OCI-LY7 (cell line): ENCODE measurements at regions of chr5 and their contacts with region 1.

Region 1: GRCh38 chr5:91499943-91500531 is 116.9 kb upstream of the ARRDC3 start:
- DNase-seq: peak; percentile 47
- H3K4me3 ChIP-seq: no peak overlapping the region
- H3K27ac ChIP-seq: no peak overlapping the region
- H3K4me1 ChIP-seq: no peaks in the 10 kb centered on the region
- CTCF ChIP-seq: peak; percentile 91

Region 2: DNA sequence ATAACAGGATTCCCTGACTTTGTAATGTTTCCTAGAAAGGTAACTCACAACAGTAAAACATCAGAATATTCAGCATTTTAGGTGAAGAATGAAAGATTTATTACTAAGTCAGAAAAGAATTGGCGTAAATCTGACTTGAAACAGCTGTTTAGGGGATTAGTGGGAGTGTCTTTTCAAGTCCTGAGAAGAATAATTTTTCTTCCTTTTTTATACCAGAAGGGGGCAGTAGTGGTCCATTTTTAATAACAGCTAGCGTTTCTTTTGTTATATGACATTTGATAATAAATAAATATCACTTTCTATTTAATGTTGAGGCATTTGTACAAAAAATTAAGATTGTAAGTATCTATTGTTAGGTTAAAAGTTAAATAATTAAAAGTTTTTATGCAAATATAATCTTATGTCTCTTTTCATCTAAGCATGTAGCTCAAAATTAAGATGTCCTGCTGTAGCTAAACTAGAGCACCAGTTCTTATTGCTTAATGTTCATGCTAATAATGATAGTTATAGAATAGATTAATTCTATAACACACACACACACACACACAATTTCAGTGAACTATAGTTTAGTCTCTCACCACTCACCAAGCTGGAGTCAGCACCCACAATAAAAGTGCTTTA is 141.8 kb after region 1 on chr5:
- CTCF ChIA-PET with region 1: no interaction called
- POLR2A ChIA-PET with region 1: no interaction called
- intact Hi-C with region 1: loop called (anchors 5 kb)
- DNase-seq: peak; percentile 50
- H3K4me3 ChIP-seq: no peak overlapping the region
- H3K27ac ChIP-seq: no peak overlapping the region
- H3K4me1 ChIP-seq: no peaks in the 10 kb centered on the region
- CTCF ChIP-seq: peak; percentile 92

Region 3: DNA sequence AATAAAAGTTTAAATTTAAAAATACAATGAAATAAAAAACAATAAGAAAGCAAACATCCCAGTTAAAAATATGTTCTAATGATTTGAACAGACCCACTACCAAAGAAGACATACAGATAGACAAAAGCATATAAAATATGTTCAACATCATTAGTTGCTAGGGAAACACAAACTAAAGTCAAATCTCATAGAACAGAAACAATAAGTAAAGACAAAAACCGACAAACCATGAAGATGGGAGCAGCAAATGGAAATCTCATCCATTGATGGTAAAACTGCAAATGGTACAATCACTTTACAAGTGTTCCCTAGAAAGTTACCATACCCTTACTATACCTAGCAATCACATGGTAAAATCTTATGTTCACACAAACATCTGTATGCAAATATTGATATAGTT is 313.5 kb after region 1 on chr5:
- CTCF ChIA-PET with region 1: no interaction called
- POLR2A ChIA-PET with region 1: no interaction called
- intact Hi-C with region 1: no loop called
- DNase-seq: no peak
- H3K4me3 ChIP-seq: no peak overlapping the region
- H3K27ac ChIP-seq: no peak overlapping the region
- H3K4me1 ChIP-seq: no peaks in the 10 kb centered on the region
- CTCF ChIP-seq: no peak

Region 4: DNA sequence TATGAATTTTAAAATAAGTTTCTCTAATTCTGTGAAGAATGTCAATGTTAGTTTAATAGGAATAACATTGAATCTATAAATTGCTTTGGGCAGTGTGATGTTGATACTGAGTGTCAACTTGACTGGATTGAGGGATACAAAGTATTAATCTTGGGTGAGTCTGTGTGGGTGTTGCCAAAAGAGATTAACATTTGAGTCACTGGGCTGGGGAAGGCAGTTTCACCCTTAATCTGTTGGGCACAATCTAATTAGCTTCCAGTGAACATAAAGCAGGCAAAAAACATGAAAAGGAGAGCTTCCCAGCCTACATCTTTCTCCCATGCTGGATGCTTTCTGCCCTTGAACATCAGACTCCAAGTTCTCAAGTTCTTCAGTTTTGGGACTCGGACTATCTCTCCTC is 715.1 kb after region 1 on chr5:
- CTCF ChIA-PET with region 1: no interaction called
- POLR2A ChIA-PET with region 1: no interaction called
- intact Hi-C with region 1: no loop called
- DNase-seq: no peak
- H3K4me3 ChIP-seq: no peak overlapping the region
- H3K27ac ChIP-seq: no peak overlapping the region
- H3K4me1 ChIP-seq: no peaks in the 10 kb centered on the region
- CTCF ChIP-seq: no peak